ENCODE measurements at regions of chr2 and their contacts with region 1.

Region 1: DNA sequence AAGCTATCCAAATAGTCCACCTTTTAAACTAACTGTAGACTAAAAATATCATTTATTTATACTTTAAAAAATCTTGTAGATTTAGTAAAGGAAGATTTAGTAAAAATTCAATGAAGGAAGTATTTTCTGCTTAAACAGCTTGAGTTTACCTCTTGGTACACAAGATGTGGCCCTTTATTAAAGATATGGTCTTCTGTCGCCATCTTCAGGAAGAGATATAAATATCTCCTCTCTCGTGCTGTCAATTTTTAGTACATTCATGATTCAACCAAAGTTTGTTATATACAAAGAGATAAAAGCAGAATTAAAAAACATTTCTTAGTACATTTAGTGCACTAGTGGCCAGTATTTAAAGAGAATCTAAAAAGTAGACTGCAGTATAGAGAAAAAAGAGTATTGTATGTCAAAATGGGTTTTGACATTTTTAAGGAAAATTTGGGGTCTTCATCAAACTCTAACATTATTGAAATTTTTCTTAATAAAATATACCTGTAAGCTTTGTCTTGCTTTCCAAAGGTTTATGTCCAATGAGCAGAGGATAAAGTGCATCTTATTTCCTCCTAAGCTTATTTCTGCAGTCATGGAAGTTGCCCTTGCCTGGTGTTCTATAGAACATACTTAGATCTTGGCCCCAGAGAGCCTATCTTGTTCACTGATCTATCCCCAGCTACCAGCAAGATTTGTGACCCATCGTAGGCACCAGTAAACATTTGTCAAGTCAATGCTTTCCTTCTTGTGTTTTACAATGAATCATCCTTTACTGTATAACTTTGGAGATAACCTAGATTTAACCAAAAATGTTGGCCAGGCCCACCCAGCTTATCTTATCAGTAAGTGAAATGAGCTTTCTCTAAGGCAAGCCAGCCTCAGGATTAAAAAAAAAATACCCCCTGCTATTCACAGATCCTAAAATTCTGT is 18.5 kb upstream of the EML6 start:
- DNase-seq: peak in 2 of 9 experiments; percentile 71 to 78
- ATAC-seq: peak; percentile 66
- H3K4me3 ChIP-seq: no peak overlapping the region
- H3K4me3 Mint-ChIP-seq: no peak overlapping the region
- H3K27ac ChIP-seq: no peak overlapping the region
- H3K27ac Mint-ChIP-seq: no peak overlapping the region
- H3K4me1 ChIP-seq: no peaks in the 10 kb centered on the region
- H3K4me1 Mint-ChIP-seq: no peaks in the 10 kb centered on the region
- H3K27me3 ChIP-seq: peaks cover 11% of the 10 kb centered on the region in 2 experiments
- H3K27me3 Mint-ChIP-seq: peaks cover 16% of the 10 kb centered on the region
- CTCF ChIP-seq: peak; percentile 81

Region 2: GRCh38 chr2:53913721-53914120 is 791.2 kb before region 1 on chr2:
- CTCF ChIA-PET with region 1: no interaction called
- POLR2A ChIA-PET with region 1: no interaction called
- intact Hi-C with region 1: loop called in 1 of 2 experiments (anchors 10 kb)
- DNase-seq: peak in 4 of 9 experiments; percentile 5 to 47 (median 24)
- ATAC-seq: peak; percentile 75
- H3K4me3 ChIP-seq: no peak overlapping the region
- H3K4me3 Mint-ChIP-seq: no peak overlapping the region
- H3K27ac ChIP-seq: peak overlapping the region in 1 of 2 experiments; percentile 17
- H3K27ac Mint-ChIP-seq: no peak overlapping the region
- H3K4me1 ChIP-seq: peaks cover 7% of the 10 kb centered on the region
- H3K4me1 Mint-ChIP-seq: peaks cover 15% of the 10 kb centered on the region
- H3K27me3 ChIP-seq: no peaks in the 10 kb centered on the region
- H3K27me3 Mint-ChIP-seq: no peaks in the 10 kb centered on the region
- CTCF ChIP-seq: no peak

Region 3: DNA sequence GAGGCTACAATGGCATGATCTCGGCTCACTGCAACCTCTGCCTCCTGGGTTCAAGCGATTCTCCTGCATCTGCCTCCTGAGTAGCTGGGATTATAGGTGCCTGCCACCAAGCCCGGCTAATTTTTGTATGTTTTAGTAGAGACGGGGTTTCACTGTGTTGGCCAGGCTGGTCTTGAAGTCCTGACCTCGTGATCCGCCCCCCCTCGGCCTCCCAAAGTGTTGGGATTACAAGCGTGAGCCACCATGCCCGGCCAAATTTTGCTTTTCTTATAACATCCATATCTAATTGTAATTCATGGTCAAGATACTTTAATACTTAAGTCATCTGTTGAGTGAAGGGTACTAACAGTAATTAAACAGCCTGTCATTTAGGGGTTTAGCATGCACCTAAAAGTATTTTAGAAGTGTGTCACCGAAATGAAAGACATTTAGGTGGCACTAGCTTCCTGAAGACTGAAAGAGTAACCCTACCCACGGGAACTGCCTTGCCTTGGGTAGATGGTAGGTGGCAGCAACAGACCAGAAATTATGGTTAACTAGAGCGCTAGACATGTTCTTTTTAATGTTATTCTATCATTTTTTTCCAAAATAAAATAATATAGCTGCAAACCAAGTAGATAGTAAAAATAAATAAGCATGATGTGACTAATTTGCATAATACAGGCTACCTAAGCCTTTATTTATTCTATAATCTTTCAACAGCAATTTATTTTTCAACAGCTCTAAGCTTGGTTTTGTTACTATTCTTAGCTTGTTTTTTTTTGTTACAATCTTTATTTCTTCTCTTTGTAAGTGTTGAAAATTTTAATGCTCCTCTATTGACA is 598.1 kb before region 1 on chr2:
- CTCF ChIA-PET with region 1: interaction called, 34 read pairs
- POLR2A ChIA-PET with region 1: no interaction called
- intact Hi-C with region 1: loop called (anchors 1 kb)
- DNase-seq: peak in 5 of 9 experiments; percentile 35 to 70 (median 53)
- ATAC-seq: peak; percentile 87
- H3K4me3 ChIP-seq: no peak overlapping the region
- H3K4me3 Mint-ChIP-seq: peak overlapping the region; percentile 11
- H3K27ac ChIP-seq: no peak overlapping the region
- H3K27ac Mint-ChIP-seq: no peak overlapping the region
- H3K4me1 ChIP-seq: no peaks in the 10 kb centered on the region
- H3K4me1 Mint-ChIP-seq: peaks cover 8% of the 10 kb centered on the region
- H3K27me3 ChIP-seq: no peaks in the 10 kb centered on the region
- H3K27me3 Mint-ChIP-seq: no peaks in the 10 kb centered on the region
- CTCF ChIP-seq: peak; percentile 70

Region 4: GRCh38 chr2:54206596-54206995 is 498.4 kb before region 1 on chr2:
- CTCF ChIA-PET with region 1: no interaction called
- POLR2A ChIA-PET with region 1: no interaction called
- intact Hi-C with region 1: loop called in 1 of 2 experiments (anchors 5 kb)
- DNase-seq: peak in 2 of 9 experiments; percentile 6 to 30
- ATAC-seq: no peak
- H3K4me3 ChIP-seq: no peak overlapping the region
- H3K4me3 Mint-ChIP-seq: no peak overlapping the region
- H3K27ac ChIP-seq: no peak overlapping the region
- H3K27ac Mint-ChIP-seq: no peak overlapping the region
- H3K4me1 ChIP-seq: no peaks in the 10 kb centered on the region
- H3K4me1 Mint-ChIP-seq: no peaks in the 10 kb centered on the region
- H3K27me3 ChIP-seq: no peaks in the 10 kb centered on the region
- H3K27me3 Mint-ChIP-seq: no peaks in the 10 kb centered on the region
- CTCF ChIP-seq: peak; percentile 26

Region 5: DNA sequence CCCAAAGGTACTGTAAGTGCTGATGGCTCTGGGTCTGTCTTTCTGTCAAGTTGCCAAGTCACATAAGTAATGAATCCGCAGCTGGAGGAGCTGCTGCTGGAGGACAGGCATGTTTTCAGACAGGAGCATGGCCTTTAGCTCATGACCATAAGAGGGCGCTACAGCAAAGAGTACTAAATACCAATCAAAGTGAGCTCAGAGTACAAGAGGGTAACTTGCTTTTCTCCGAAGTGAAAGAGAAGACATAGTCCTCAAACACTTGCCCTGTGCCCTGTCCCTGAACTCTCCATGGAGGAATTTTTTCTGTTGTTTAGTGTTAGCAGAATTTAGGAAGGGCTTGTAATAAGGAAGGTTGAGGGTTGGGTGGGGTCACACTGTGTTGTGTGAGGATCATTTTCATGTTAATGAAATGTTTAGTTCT is 39.5 kb before region 1 on chr2:
- CTCF ChIA-PET with region 1: interaction called, 15 read pairs
- POLR2A ChIA-PET with region 1: no interaction called
- intact Hi-C with region 1: no loop called
- DNase-seq: peak in 6 of 9 experiments; percentile 7 to 66 (median 39)
- ATAC-seq: peak; percentile 68
- H3K4me3 ChIP-seq: no peak overlapping the region
- H3K4me3 Mint-ChIP-seq: no peak overlapping the region
- H3K27ac ChIP-seq: no peak overlapping the region
- H3K27ac Mint-ChIP-seq: peak overlapping the region; percentile 75
- H3K4me1 ChIP-seq: no peaks in the 10 kb centered on the region
- H3K4me1 Mint-ChIP-seq: peaks cover 3% of the 10 kb centered on the region
- H3K27me3 ChIP-seq: no peaks in the 10 kb centered on the region
- H3K27me3 Mint-ChIP-seq: no peaks in the 10 kb centered on the region
- CTCF ChIP-seq: peak; percentile 68

Region 6: DNA sequence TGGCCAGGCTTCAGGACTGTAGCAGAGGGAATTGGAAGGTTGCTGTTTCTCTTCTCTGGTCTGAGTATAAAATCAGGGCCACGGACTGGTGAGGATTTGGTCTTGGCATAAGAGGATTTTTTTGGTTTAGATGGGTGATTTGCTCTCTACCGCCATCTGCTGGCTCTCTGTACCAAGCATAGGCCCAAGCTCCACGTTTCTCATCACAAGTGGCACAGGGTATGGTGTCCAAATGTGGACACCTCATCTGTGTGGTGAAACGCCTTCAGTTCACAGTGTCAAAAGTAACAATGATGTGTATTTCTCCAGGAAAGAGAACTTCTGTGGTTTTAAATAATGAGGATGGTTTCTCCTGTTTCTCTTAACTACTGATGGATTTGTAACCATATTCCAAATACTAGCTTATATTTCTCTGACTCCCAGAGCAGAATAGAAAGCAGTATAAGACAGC is 133.7 kb after region 1 on chr2:
- CTCF ChIA-PET with region 1: interaction called, 8 read pairs
- POLR2A ChIA-PET with region 1: no interaction called
- intact Hi-C with region 1: loop called in 1 of 2 experiments (anchors 1 kb)
- DNase-seq: peak; percentile 28 to 75 (median 68)
- ATAC-seq: peak; percentile 80
- H3K4me3 ChIP-seq: no peak overlapping the region
- H3K4me3 Mint-ChIP-seq: no peak overlapping the region
- H3K27ac ChIP-seq: no peak overlapping the region
- H3K27ac Mint-ChIP-seq: no peak overlapping the region
- H3K4me1 ChIP-seq: no peaks in the 10 kb centered on the region
- H3K4me1 Mint-ChIP-seq: no peaks in the 10 kb centered on the region
- H3K27me3 ChIP-seq: no peaks in the 10 kb centered on the region
- H3K27me3 Mint-ChIP-seq: no peaks in the 10 kb centered on the region
- CTCF ChIP-seq: peak; percentile 95